HEK293 (cell line): ENCODE measurements at regions of chr17 and their contacts with region 1.

Region 1: DNA sequence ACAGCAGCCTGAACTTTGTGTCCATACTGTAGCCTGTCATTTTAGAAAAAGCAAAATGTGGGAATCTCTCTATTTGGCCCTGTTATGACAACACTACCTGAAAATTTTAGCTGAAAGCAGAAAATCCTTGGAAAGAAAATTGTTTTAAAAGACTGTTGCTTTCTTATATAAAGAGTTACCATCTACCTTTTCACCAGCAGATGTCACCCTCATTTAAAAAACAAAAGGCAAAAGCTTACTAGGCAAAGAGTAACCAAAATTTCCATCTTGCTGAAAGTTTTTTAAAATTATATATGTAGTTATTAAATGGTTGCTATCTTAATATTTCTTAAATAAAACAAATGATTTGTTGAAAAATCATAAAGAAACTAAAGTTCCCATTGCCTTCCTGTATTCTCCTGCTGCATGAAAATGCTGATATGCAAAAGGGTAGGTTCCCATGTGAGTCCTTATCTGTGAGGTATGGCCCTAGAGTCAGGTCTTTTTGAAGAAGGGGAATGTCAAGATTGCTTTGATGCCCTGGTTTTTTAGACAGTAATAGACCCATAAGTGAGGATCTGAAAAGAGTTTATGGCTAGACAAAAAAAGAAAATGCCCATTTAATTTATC is 61.0 kb downstream of the TNRC6C start:
- H3K4me3 ChIP-seq: no peak overlapping the region
- H3K27ac ChIP-seq: no peak overlapping the region
- H3K4me1 ChIP-seq: no peaks in the 10 kb centered on the region
- CTCF ChIP-seq: 0 out of 2 replicates have a peak, but pooled peaks have one; percentile 13

Region 2: DNA sequence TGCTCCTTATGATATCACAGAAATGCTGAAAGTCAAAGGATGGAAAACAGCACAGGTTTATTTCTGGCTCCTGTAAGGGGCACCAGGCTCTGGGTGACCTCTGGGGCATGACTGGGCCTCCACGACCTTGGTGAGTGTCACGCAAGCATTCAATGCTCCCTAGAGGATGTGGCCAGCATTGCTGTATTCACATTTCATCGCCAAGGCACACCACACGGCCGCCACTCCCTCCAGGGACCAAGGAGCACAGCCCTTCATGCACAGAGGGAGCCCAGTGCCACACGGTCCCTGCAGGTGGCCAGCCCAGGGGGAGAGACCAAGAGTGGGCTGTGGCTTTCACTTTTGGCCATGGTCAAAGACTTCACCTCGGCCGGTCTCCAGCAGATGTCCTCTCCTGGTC is 198.4 kb before region 1 on chr17:
- CTCF ChIA-PET with region 1: no interaction called
- POLR2A ChIA-PET with region 1: no interaction called
- H3K4me3 ChIP-seq: no peak overlapping the region
- H3K27ac ChIP-seq: no peak overlapping the region
- H3K4me1 ChIP-seq: 0 out of 2 replicates have a peak, but pooled peaks cover 7% of the 10 kb centered on the region
- CTCF ChIP-seq: peak; percentile 13; the same call in 1 of the 2 replicates

Region 3: GRCh38 chr17:78005452-78006171 is 13.9 kb before region 1 on chr17:
- CTCF ChIA-PET with region 1: interaction called, 55 read pairs
- POLR2A ChIA-PET with region 1: no interaction called
- H3K4me3 ChIP-seq: no peak overlapping the region
- H3K27ac ChIP-seq: no peak overlapping the region
- H3K4me1 ChIP-seq: peaks cover 11% of the 10 kb centered on the region
- CTCF ChIP-seq: no peak

Region 4: GRCh38 chr17:78032166-78032565 is 12.7 kb after region 1 on chr17:
- CTCF ChIA-PET with region 1: interaction called, 58 read pairs
- POLR2A ChIA-PET with region 1: interaction called, 3 read pairs
- H3K4me3 ChIP-seq: no peak overlapping the region
- H3K27ac ChIP-seq: no peak overlapping the region
- H3K4me1 ChIP-seq: no peaks in the 10 kb centered on the region
- CTCF ChIP-seq: no peak